WTC11 (cell line): ENCODE measurements at regions of chr16 and their contacts with region 1.

Region 1: GRCh38 chr16:23182460-23183309 is at the start of gene SCNN1G:
- DNase-seq: peak; percentile 94
- ATAC-seq: peak; percentile 90
- H3K4me3 Mint-ChIP-seq: peak within 1 kb of the TSS; percentile 75
- H3K27ac Mint-ChIP-seq: no peak within 1 kb of the TSS
- H3K4me1 Mint-ChIP-seq: peaks cover 16% of the 10 kb centered on the region
- H3K27me3 Mint-ChIP-seq: peaks cover 47% of the 10 kb centered on the region
- CTCF ChIP-seq: peak; percentile 80
- total RNA-seq, gene SCNN1G: 0.78 to 1.3 TPM (median 0.80 TPM) in 3 replicates

Region 2: GRCh38 chr16:23209606-23210005 is 26.9 kb after region 1 on chr16:
- CTCF ChIA-PET with region 1: interaction called, 10 read pairs
- POLR2A ChIA-PET with region 1: no interaction called
- DNase-seq: no peak
- ATAC-seq: no peak
- H3K4me3 Mint-ChIP-seq: no peak overlapping the region
- H3K27ac Mint-ChIP-seq: no peak overlapping the region
- H3K4me1 Mint-ChIP-seq: peaks cover 40% of the 10 kb centered on the region
- H3K27me3 Mint-ChIP-seq: peaks cover 19% of the 10 kb centered on the region
- CTCF ChIP-seq: no peak

Region 3: GRCh38 chr16:23232806-23233205 is 50.1 kb after region 1 on chr16:
- CTCF ChIA-PET with region 1: no interaction called
- POLR2A ChIA-PET with region 1: no interaction called
- DNase-seq: no peak
- ATAC-seq: no peak
- H3K4me3 Mint-ChIP-seq: no peak overlapping the region
- H3K27ac Mint-ChIP-seq: no peak overlapping the region
- H3K4me1 Mint-ChIP-seq: no peaks in the 10 kb centered on the region
- H3K27me3 Mint-ChIP-seq: peaks cover 3% of the 10 kb centered on the region; the same call in 1 of the 2 replicates
- CTCF ChIP-seq: no peak

Region 4: GRCh38 chr16:23330583-23331249 is 148.0 kb after region 1 on chr16:
- CTCF ChIA-PET with region 1: interaction called, 13 read pairs
- POLR2A ChIA-PET with region 1: no interaction called
- DNase-seq: no peak
- ATAC-seq: no peak
- H3K4me3 Mint-ChIP-seq: no peak overlapping the region
- H3K27ac Mint-ChIP-seq: no peak overlapping the region
- H3K4me1 Mint-ChIP-seq: no peaks in the 10 kb centered on the region
- H3K27me3 Mint-ChIP-seq: no peaks in the 10 kb centered on the region
- CTCF ChIP-seq: no peak